PC-3 (cell line): ENCODE measurements at regions of chr5 and their contacts with region 1.

Region 1: GRCh38 chr5:133051580-133052332 is at the start of gene HSPA4:
- DNase-seq: peak; percentile 96
- ATAC-seq: peak; percentile 82
- H3K4me3 ChIP-seq: peak within 1 kb of the TSS; percentile 97
- H3K27ac ChIP-seq: peak within 1 kb of the TSS; percentile 82
- H3K4me1 ChIP-seq: peaks cover 28% of the 10 kb centered on the region
- H3K27me3 ChIP-seq: no peaks in the 10 kb centered on the region
- CTCF ChIP-seq: no peak
- total RNA-seq, gene HSPA4: 70.6 and 82.9 TPM in 2 replicates

Region 2: DNA sequence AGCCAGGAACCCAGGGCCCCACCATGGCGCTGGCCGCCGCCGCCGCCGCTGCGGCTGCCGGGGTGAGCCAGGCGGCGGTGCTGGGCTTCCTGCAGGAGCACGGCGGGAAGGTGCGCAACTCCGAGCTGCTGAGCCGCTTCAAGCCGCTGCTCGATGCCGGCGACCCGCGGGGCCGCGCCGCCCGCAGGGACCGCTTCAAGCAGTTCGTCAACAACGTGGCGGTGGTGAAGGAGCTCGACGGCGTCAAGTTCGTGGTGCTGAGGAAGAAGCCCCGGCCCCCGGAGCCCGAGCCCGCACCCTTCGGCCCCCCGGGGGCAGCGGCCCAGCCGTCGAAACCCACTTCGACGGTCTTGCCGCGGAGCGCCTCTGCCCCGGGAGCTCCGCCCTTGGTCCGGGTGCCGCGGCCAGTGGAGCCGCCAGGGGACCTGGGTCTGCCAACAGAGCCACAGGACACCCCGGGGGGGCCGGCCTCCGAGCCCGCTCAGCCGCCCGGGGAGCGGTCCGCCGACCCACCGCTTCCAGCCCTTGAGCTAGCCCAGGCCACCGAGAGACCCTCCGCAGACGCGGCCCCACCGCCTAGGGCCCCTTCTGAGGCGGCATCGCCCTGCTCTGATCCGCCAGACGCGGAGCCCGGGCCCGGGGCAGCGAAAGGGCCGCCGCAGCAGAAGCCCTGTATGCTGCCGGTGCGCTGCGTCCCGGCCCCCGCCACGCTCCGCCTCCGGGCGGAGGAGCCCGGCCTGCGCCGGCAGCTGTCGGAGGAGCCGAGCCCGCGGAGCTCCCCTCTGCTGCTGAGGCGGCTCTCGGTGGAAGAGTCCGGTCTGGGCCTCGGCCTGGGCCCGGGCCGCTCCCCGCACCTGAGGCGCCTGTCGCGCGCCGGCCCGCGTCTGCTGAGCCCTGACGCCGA is 237.9 kb before region 1 on chr5:
- CTCF ChIA-PET with region 1: no interaction called
- POLR2A ChIA-PET with region 1: no interaction called
- intact Hi-C with region 1: no loop called
- DNase-seq: no peak
- ATAC-seq: peak; percentile 80
- H3K4me3 ChIP-seq: peak overlapping the region; percentile 64; the same call in 1 of the 2 replicates
- H3K27ac ChIP-seq: no peak overlapping the region
- H3K4me1 ChIP-seq: peaks cover 5% of the 10 kb centered on the region; the same call in 1 of the 2 replicates
- H3K27me3 ChIP-seq: no peaks in the 10 kb centered on the region
- CTCF ChIP-seq: no peak

Region 3: GRCh38 chr5:132963175-132964104 is 88.3 kb before region 1 on chr5 and contains the start of gene AFF4:
- CTCF ChIA-PET with region 1: no interaction called
- POLR2A ChIA-PET with region 1: interaction called, 4 read pairs
- intact Hi-C with region 1: loop called (anchors 2 kb)
- DNase-seq: peak; percentile 87
- ATAC-seq: peak; percentile 93
- H3K4me3 ChIP-seq: peak within 1 kb of the TSS; percentile 73
- H3K27ac ChIP-seq: peak within 1 kb of the TSS; percentile 80
- H3K4me1 ChIP-seq: peaks cover 9% of the 10 kb centered on the region
- H3K27me3 ChIP-seq: no peaks in the 10 kb centered on the region
- CTCF ChIP-seq: no peak
- total RNA-seq, gene AFF4: 20.7 and 23.5 TPM in 2 replicates

Region 4: GRCh38 chr5:133025804-133026663 is 25.7 kb before region 1 on chr5 and contains the start of gene ZCCHC10:
- CTCF ChIA-PET with region 1: no interaction called
- POLR2A ChIA-PET with region 1: no interaction called
- intact Hi-C with region 1: loop called (anchors 1 kb)
- DNase-seq: peak; percentile 87
- ATAC-seq: peak; percentile 99
- H3K4me3 ChIP-seq: peak within 1 kb of the TSS; percentile 99
- H3K27ac ChIP-seq: peak within 1 kb of the TSS; percentile 66
- H3K4me1 ChIP-seq: no peaks in the 10 kb centered on the region
- H3K27me3 ChIP-seq: no peaks in the 10 kb centered on the region
- CTCF ChIP-seq: no peak
- total RNA-seq, gene ZCCHC10: 3.7 and 6.1 TPM in 2 replicates

Region 5: DNA sequence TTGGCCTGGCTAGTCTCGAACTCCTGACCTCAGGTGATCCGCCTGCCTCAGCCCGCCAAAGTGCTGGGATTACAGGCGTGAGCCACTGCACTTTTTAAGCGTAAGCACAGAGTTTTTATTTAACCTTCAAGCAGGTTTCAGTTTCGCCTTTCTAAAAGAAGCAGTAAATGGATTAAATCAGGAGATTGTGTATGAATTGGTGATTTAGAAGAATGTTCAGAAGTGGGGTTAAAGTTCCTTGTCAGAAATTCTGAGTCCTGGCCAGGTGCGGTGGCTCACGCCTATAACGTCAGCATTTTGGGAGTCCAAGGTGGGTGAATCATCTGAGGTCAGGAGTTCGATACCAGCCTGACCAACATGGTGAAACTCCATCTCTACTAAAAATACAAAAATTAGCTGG is 12.2 kb after region 1 on chr5:
- CTCF ChIA-PET with region 1: no interaction called
- POLR2A ChIA-PET with region 1: no interaction called
- intact Hi-C with region 1: no loop called
- DNase-seq: peak; percentile 13
- ATAC-seq: no peak
- H3K4me3 ChIP-seq: no peak overlapping the region
- H3K27ac ChIP-seq: no peak overlapping the region
- H3K4me1 ChIP-seq: peaks cover 13% of the 10 kb centered on the region
- H3K27me3 ChIP-seq: no peaks in the 10 kb centered on the region
- CTCF ChIP-seq: no peak